OCI-LY7 (cell line): ENCODE measurements at regions of chr4 and their contacts with region 1.

Region 1: GRCh38 chr4:76198411-76199237 is 15.0 kb downstream of the SCARB2 start:
- DNase-seq: peak; percentile 20
- H3K4me3 ChIP-seq: no peak overlapping the region
- H3K27ac ChIP-seq: no peak overlapping the region
- H3K4me1 ChIP-seq: peaks cover 26% of the 10 kb centered on the region
- CTCF ChIP-seq: no peak

Region 2: DNA sequence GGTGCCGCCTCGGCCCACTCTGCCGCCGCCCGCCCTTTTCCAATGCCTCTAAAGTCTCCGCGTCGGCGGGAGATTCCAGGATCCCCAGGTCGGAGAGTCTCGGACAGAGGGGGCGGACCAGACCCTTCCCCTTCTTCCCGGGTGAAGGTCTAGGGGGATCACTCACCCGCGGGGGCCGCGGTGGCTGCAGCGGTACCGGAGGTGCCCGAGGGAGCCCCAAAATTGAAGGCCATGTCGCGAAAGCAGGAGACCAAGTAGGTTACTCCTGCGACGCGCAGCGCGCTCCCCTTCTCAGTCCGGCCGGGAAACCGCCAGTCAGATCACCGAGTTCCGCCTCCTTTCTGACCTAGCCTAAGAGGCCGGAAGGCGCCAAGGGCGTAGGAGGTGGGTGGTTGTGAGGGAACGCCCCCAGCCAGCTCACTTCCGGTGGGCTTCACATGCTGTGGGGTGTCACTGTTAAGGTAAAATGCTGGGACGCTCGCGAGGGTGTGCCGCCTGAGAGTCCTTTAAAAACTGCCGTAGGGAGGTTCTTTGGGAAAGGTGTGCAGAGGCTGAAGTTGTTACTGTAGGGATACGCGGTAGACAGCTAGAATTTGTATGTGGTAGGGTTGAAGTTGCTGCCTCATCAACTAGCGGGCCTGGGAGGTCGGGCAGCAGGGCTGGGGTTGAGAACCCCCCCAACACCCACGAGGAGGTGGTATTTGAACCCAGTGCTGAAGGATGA is 50.3 kb before region 1 on chr4 and contains the start of gene NUP54:
- CTCF ChIA-PET with region 1: no interaction called
- POLR2A ChIA-PET with region 1: no interaction called
- intact Hi-C with region 1: loop called (anchors 2 kb)
- DNase-seq: peak; percentile 96
- H3K4me3 ChIP-seq: peak within 1 kb of the TSS; percentile 96
- H3K27ac ChIP-seq: peak within 1 kb of the TSS; percentile 34
- H3K4me1 ChIP-seq: peaks cover 25% of the 10 kb centered on the region
- CTCF ChIP-seq: no peak
- total RNA-seq, gene NUP54: 29.2 and 40.2 TPM in 2 replicates

Region 3: DNA sequence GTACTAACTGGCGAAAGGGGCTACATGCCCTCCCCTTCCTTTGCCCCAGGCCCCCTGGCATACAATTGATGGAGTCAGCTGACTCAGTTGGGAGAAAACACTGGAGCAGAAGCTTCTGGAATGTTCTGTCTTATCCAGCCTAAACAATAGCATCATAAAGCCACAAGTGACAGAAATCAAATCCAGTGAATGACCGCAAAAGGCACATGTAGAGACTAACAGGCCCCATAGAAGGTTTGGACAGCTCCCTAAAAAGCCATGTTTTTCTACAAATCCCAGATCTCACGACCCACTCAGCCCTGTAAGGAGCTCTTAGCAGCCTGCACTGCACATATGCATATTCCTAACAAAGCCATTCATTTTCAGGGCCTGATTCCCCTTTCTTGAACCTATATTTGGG is 10.1 kb before region 1 on chr4:
- CTCF ChIA-PET with region 1: no interaction called
- POLR2A ChIA-PET with region 1: no interaction called
- intact Hi-C with region 1: no loop called
- DNase-seq: no peak
- H3K4me3 ChIP-seq: no peak overlapping the region
- H3K27ac ChIP-seq: no peak overlapping the region
- H3K4me1 ChIP-seq: no peaks in the 10 kb centered on the region
- CTCF ChIP-seq: no peak